PC-3 (cell line): ENCODE measurements at regions of chr3 and their contacts with region 1.

Region 1: DNA sequence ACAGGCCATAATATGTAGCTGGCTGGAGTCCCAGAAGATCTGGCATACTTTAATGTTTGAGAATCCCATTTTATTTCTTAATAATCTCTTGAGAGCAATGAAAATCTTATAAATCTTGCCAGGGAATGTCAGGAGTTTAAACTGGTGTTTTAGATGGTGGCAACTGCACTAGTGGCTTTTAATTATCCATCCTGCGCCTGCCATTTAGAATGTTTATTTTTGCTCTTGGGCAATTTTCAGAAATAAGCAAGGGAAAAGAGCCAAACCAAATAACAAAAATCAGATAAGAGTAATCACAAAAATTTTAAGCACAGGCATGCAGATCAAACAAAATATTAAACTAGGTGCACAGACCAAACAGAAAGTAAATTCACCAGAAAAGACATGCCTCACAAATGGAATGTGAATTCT is 41.9 kb upstream of the UBP1 start:
- DNase-seq: no peak
- ATAC-seq: peak; percentile 37
- H3K4me3 ChIP-seq: no peak overlapping the region
- H3K27ac ChIP-seq: no peak overlapping the region
- H3K4me1 ChIP-seq: no peaks in the 10 kb centered on the region
- H3K27me3 ChIP-seq: no peaks in the 10 kb centered on the region
- CTCF ChIP-seq: no peak

Region 2: GRCh38 chr3:33277193-33277882 is 204.8 kb before region 1 on chr3 and contains the start of gene FBXL2:
- CTCF ChIA-PET with region 1: no interaction called
- POLR2A ChIA-PET with region 1: no interaction called
- intact Hi-C with region 1: no loop called
- DNase-seq: peak; percentile 87
- ATAC-seq: peak; percentile 93
- H3K4me3 ChIP-seq: peak within 1 kb of the TSS; percentile 74
- H3K27ac ChIP-seq: no peak within 1 kb of the TSS
- H3K4me1 ChIP-seq: peaks cover 9% of the 10 kb centered on the region
- H3K27me3 ChIP-seq: no peaks in the 10 kb centered on the region
- CTCF ChIP-seq: no peak
- total RNA-seq, gene FBXL2: 7.2 and 9.4 TPM in 2 replicates

Region 3: DNA sequence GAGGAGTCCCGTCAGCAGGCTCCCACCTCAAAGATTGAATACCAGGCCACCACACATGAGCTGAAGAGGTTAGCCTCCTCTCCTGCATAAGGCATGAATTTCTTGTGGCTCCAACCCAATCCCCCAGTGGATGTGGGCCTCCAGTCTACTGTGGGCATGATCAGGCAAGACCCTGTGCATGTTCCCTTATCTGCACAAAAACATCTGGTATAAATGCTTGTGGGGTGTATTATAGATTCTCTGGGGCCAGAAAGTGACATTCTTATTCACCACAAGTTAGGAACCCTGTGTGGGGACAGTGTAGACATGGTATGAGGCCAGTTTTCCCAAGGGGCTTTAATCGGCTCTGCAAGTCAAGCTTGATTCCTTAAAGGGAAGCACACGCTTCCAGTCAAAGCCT is 23.7 kb before region 1 on chr3:
- CTCF ChIA-PET with region 1: no interaction called
- POLR2A ChIA-PET with region 1: interaction called, 12 read pairs
- intact Hi-C with region 1: no loop called
- DNase-seq: no peak
- ATAC-seq: no peak
- H3K4me3 ChIP-seq: no peak overlapping the region
- H3K27ac ChIP-seq: no peak overlapping the region
- H3K4me1 ChIP-seq: no peaks in the 10 kb centered on the region
- H3K27me3 ChIP-seq: no peaks in the 10 kb centered on the region
- CTCF ChIP-seq: no peak